CD14-positive monocyte (primary cell): ENCODE measurements at regions of chr6 and their contacts with region 1.

Region 1: DNA sequence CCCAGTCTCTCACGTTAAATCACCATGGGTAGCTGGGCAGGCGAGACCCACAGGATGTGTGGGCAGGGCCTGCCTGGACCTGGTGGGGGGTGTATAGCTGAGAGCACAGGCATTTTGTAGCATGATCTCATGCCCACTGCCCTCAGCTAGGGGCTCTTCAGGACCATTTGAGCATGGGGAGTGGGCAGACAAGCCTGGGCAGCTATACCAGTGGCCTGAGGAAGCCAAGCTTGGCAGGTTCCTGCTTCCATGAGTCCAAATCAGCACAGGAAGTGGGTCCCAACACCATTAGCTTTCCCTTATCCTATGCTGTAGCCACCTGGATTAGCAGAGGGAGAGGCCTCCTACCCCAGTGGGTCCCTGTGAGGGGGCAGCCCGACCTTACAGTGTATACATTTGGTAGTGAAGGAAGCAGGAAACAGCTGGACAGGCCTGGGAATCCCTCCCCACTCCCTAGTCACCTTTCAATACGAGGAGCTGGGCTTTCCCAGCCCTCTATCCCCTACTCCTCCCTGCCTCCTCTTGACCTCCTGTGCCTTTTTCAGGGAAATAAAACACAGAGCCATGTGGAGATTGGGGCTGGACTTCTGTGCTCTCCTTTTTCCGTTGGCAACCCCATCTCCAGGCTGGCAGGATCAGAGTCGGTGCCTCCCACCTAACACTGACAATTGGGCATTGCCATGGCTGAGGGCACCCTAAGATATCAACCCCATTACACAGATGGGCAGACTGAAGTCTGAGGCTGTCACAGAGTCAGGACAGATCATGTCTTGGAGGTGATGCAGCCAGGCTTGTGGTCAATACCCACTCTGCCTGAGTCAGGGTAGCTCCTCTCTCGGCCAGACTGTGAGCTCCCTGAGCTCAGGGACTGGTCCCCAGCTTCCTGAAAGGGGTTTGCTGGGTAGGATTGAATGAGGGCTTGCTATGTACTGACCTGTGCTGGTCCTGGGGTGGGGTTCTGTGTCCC is 59.8 kb downstream of the MRPL14 start:
- DNase-seq: peak in 2 of 3 donors; percentile 34 to 57
- H3K4me3 ChIP-seq: no peak overlapping the region
- H3K4me3 Mint-ChIP-seq: no peak overlapping the region
- H3K27ac ChIP-seq: peak overlapping the region in 1 of 2 donors; percentile 15
- H3K27ac Mint-ChIP-seq: peak overlapping the region; percentile 45 to 100 (median 73)
- H3K4me1 ChIP-seq: peaks cover 22 to 36% of the 10 kb centered on the region in 2 donors
- H3K4me1 Mint-ChIP-seq: peaks cover 38% of the 10 kb centered on the region
- H3K27me3 ChIP-seq: peaks cover 0 to 12% of the 10 kb centered on the region in 2 donors
- H3K27me3 Mint-ChIP-seq: peaks cover 25 to 42% (median 28%) of the 10 kb centered on the region in 3 donors
- CTCF ChIP-seq: no peak

Region 2: DNA sequence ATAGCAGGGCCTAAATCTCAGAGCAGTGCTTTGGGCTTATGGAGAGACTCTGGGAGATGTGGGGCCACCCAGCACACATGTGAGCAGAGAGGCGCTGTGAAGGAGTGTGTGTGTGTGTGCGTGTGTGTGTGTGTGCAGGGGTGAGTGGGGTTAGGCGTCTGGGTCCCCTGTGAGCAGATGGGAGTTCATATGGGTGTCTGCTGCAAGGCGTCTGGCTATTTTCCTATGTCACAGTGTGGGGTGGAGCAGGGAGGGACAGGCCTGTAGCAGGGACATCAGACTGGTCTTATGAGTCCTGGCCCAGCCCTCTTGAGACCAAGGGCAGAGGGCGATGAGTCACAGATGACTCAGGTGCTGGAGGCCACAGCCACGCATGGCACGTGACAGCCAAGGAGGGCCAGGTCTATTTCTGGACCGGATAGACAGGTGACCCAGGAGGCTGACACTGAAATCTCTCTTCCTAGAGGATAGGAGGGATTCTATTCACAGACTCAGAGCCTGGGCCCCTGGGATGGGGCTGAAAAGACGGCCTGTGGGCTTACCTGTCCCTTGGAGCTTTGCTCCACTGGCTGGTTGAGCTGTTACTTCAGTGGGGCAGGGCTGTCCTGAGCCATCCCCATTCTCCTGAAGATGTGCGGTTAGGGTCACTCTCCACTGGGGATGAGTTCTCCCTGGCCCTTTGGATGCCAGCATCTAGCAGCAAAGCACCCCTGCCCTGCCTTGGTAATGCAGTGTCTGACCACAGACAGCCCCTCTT is 268.6 kb before region 1 on chr6:
- intact Hi-C with region 1: loop called in 1 of 2 experiments (anchors 2 kb)
- DNase-seq: peak; percentile 93 to 95 (median 93)
- H3K4me3 ChIP-seq: peak overlapping the region in 1 of 3 experiments; percentile 21
- H3K4me3 Mint-ChIP-seq: peak overlapping the region; percentile 48 to 73
- H3K27ac ChIP-seq: peak overlapping the region; percentile 84 to 85
- H3K27ac Mint-ChIP-seq: peak overlapping the region; percentile 87 to 97 (median 88)
- H3K4me1 ChIP-seq: peaks cover 89 to 90% of the 10 kb centered on the region in 2 donors
- H3K4me1 Mint-ChIP-seq: peaks cover 91% of the 10 kb centered on the region
- H3K27me3 ChIP-seq: no peaks in the 10 kb centered on the region
- H3K27me3 Mint-ChIP-seq: peaks cover 0 to 7% (median 0%) of the 10 kb centered on the region in 3 donors
- CTCF ChIP-seq: no peak